ENCODE measurements at regions of chr3 and their contacts with region 1.

Region 1: GRCh38 chr3:122514123-122515019 is at the start of gene KPNA1:
- DNase-seq: peak; percentile 92
- ATAC-seq: peak; percentile 83
- H3K4me3 Mint-ChIP-seq: peak within 1 kb of the TSS; percentile 85
- H3K27ac Mint-ChIP-seq: peak within 1 kb of the TSS; percentile 82
- H3K4me1 Mint-ChIP-seq: peaks cover 42% of the 10 kb centered on the region
- H3K27me3 Mint-ChIP-seq: no peaks in the 10 kb centered on the region
- CTCF ChIP-seq: no peak
- total RNA-seq, gene KPNA1: 72.9 and 76.4 TPM in 2 replicates

Region 2: GRCh38 chr3:121749276-121750086 is 764.9 kb before region 1 on chr3 and contains the start of gene GOLGB1:
- CTCF ChIA-PET with region 1: no interaction called
- POLR2A ChIA-PET with region 1: no interaction called
- intact Hi-C with region 1: loop called (anchors 2 kb)
- DNase-seq: peak; percentile 81
- ATAC-seq: peak; percentile 93
- H3K4me3 Mint-ChIP-seq: no peak within 1 kb of the TSS
- H3K27ac Mint-ChIP-seq: no peak within 1 kb of the TSS
- H3K4me1 Mint-ChIP-seq: peaks cover 4% of the 10 kb centered on the region
- H3K27me3 Mint-ChIP-seq: no peaks in the 10 kb centered on the region
- CTCF ChIP-seq: no peak
- total RNA-seq, gene GOLGB1: 37.3 and 44.7 TPM in 2 replicates

Region 3: GRCh38 chr3:122383771-122384697 is 130.3 kb before region 1 on chr3 and contains the start of gene FAM162A:
- CTCF ChIA-PET with region 1: no interaction called
- POLR2A ChIA-PET with region 1: interaction called, 5 read pairs
- intact Hi-C with region 1: loop called (anchors 1 kb)
- DNase-seq: peak; percentile 93
- ATAC-seq: peak; percentile 94
- H3K4me3 Mint-ChIP-seq: peak within 1 kb of the TSS; percentile 94
- H3K27ac Mint-ChIP-seq: peak within 1 kb of the TSS; percentile 91
- H3K4me1 Mint-ChIP-seq: peaks cover 38% of the 10 kb centered on the region
- H3K27me3 Mint-ChIP-seq: no peaks in the 10 kb centered on the region
- CTCF ChIP-seq: no peak
- total RNA-seq, gene FAM162A: 28.5 and 33.9 TPM in 2 replicates

Region 4: GRCh38 chr3:122458992-122459391 is 55.4 kb before region 1 on chr3:
- CTCF ChIA-PET with region 1: no interaction called
- POLR2A ChIA-PET with region 1: interaction called, 5 read pairs
- intact Hi-C with region 1: loop called (anchors 1 kb)
- DNase-seq: no peak
- ATAC-seq: no peak
- H3K4me3 Mint-ChIP-seq: no peak overlapping the region
- H3K27ac Mint-ChIP-seq: no peak overlapping the region
- H3K4me1 Mint-ChIP-seq: peaks cover 10% of the 10 kb centered on the region
- H3K27me3 Mint-ChIP-seq: no peaks in the 10 kb centered on the region
- CTCF ChIP-seq: no peak

Region 5: GRCh38 chr3:122497425-122497824 is 16.9 kb before region 1 on chr3:
- CTCF ChIA-PET with region 1: no interaction called
- POLR2A ChIA-PET with region 1: interaction called, 5 read pairs
- intact Hi-C with region 1: loop called (anchors 2 kb)
- DNase-seq: no peak
- ATAC-seq: peak; percentile 92
- H3K4me3 Mint-ChIP-seq: no peak overlapping the region
- H3K27ac Mint-ChIP-seq: peak overlapping the region; percentile 46
- H3K4me1 Mint-ChIP-seq: peaks cover 31% of the 10 kb centered on the region
- H3K27me3 Mint-ChIP-seq: no peaks in the 10 kb centered on the region
- CTCF ChIP-seq: no peak

Region 6: DNA sequence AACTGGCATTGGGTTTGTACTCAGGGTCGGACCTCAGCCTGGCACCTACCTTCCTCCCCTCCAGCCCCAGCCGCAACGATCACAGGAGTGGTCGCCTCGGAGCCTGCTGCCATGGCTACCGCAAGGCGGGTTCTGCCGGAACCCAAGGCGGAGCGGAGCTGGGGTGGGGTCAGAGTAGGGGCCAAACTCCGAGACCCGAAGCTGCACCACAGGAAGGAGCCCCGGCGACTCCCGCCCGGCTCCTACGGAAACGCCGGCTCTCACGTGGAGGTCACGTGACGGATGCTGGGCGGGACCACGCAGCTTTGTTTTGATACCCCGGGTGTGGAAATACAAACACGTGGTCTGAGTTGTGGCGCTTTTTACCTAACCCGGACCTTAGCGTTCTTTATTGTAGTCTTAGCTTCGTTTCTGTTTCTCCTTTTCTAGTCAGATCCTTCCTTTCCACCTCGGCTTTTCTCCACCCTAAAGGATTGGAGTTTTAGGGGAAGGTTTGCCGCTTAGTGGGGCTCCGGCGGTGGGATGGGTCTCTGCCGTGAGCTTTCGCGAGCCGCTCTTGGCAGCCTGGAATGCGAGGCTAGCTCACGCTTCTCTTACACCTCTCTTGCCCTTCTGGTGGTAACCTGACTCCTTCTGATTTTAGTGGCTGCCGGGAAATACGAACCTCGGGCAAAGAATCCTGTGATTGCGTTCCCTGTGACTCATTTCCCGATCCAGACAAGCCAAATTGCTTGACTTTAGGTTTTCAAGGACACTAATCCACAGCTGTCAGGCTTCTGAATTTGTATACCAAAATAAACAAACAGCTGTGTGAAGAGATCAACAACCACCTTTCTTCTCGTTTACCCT is 279.4 kb after region 1 on chr3 and contains the start of gene HSPBAP1:
- CTCF ChIA-PET with region 1: no interaction called
- POLR2A ChIA-PET with region 1: interaction called, 3 read pairs
- intact Hi-C with region 1: loop called (anchors 2 kb)
- DNase-seq: peak; percentile 91
- ATAC-seq: peak; percentile 67
- H3K4me3 Mint-ChIP-seq: no peak within 1 kb of the TSS
- H3K27ac Mint-ChIP-seq: peak within 1 kb of the TSS; percentile 86
- H3K4me1 Mint-ChIP-seq: peaks cover 30% of the 10 kb centered on the region
- H3K27me3 Mint-ChIP-seq: no peaks in the 10 kb centered on the region
- CTCF ChIP-seq: no peak
- total RNA-seq, gene HSPBAP1: 18.1 and 20.6 TPM in 2 replicates

Region 7: DNA sequence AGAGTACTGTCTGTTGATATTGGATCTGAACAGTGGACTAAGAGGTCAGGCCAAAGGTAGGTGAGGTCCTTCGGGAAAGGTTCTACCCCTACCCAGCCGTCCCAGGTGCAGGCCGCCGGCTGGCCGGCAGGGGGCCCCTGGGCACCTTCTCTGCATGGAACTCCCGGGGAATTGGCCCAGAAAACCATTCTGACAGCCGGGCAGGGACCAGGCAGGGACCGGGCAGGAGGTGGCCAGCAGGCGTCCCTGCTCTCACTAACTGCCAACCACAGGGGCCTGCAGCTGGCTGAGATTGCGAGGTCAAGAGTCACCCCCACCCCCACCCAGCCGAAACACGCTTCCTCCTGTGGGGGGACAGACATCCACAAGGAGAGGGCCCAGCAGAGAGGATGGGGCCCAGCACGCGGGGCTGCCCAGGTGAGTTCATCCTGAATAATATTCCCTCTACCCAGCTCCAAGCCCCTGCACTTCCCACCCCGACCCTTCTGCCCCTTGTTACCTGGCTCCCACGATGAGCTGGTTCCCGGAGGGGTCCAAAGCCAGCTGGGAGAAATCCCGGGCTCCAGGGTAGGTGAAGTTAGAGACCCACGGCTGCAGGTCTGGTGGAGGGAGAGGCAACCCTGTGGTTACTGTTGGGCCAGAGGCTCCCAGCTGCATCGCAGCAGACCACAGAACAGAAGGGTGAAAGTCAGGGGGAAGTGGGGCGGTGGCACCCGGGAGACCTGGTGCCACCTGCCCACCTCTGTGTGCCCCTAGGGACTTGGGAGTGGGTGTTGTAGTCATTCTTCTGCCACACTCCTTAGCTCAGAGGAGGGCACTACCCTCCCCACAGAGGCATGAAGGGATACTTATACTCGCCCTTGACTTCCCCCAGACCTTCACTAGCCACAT is 428.8 kb after region 1 on chr3:
- CTCF ChIA-PET with region 1: no interaction called
- POLR2A ChIA-PET with region 1: no interaction called
- intact Hi-C with region 1: no loop called
- DNase-seq: peak; percentile 38
- ATAC-seq: peak; percentile 59
- H3K4me3 Mint-ChIP-seq: no peak overlapping the region
- H3K27ac Mint-ChIP-seq: no peak overlapping the region
- H3K4me1 Mint-ChIP-seq: peaks cover 27% of the 10 kb centered on the region
- H3K27me3 Mint-ChIP-seq: no peaks in the 10 kb centered on the region
- CTCF ChIP-seq: no peak

Measured in activated B cell treated with CpG ODN at 0.5 μM for 24 hours (primary cell).